ENCODE measurements at regions of chr2 and their contacts with region 1.

Region 1: DNA sequence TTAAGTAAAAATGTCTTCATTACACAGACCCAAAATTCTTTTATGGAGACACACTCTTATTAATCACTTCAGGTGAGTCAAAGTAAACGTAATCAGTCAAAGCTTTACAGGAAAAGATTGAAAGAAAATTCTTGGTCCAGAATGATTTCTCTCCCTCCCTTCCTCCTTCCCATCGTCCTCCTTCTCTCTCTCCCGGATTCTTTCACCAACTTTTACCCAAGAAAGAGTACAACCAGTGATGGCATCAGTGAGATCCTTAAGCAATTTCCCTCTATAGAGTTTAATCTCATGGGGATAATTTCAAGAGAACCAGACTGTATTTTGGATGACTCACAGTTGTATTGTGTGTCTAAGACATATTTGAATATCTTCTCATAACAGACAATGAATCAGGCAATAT is 258.1 kb downstream of the ALK start:
- DNase-seq: peak; percentile 83
- ATAC-seq: peak; percentile 75
- H3K4me3 ChIP-seq: peak overlapping the region; percentile 31
- H3K27ac ChIP-seq: peak overlapping the region; percentile 96
- H3K4me1 ChIP-seq: peaks cover 42% of the 10 kb centered on the region
- H3K27me3 ChIP-seq: no peaks in the 10 kb centered on the region
- CTCF ChIP-seq: no peak

Region 2: GRCh38 chr2:29420999-29421782 is 242.1 kb before region 1 on chr2:
- CTCF ChIA-PET with region 1: no interaction called
- POLR2A ChIA-PET with region 1: no interaction called
- intact Hi-C with region 1: loop called (anchors 1 kb)
- DNase-seq: no peak
- ATAC-seq: no peak
- H3K4me3 ChIP-seq: no peak overlapping the region
- H3K27ac ChIP-seq: no peak overlapping the region
- H3K4me1 ChIP-seq: no peaks in the 10 kb centered on the region
- H3K27me3 ChIP-seq: no peaks in the 10 kb centered on the region
- CTCF ChIP-seq: no peak

Region 3: GRCh38 chr2:29573612-29574011 is 89.7 kb before region 1 on chr2:
- CTCF ChIA-PET with region 1: no interaction called
- POLR2A ChIA-PET with region 1: no interaction called
- intact Hi-C with region 1: loop called (anchors 5 kb)
- DNase-seq: peak; percentile 65
- ATAC-seq: peak; percentile 97
- H3K4me3 ChIP-seq: no peak overlapping the region
- H3K27ac ChIP-seq: no peak overlapping the region
- H3K4me1 ChIP-seq: peaks cover 13% of the 10 kb centered on the region
- H3K27me3 ChIP-seq: no peaks in the 10 kb centered on the region
- CTCF ChIP-seq: no peak

Region 4: DNA sequence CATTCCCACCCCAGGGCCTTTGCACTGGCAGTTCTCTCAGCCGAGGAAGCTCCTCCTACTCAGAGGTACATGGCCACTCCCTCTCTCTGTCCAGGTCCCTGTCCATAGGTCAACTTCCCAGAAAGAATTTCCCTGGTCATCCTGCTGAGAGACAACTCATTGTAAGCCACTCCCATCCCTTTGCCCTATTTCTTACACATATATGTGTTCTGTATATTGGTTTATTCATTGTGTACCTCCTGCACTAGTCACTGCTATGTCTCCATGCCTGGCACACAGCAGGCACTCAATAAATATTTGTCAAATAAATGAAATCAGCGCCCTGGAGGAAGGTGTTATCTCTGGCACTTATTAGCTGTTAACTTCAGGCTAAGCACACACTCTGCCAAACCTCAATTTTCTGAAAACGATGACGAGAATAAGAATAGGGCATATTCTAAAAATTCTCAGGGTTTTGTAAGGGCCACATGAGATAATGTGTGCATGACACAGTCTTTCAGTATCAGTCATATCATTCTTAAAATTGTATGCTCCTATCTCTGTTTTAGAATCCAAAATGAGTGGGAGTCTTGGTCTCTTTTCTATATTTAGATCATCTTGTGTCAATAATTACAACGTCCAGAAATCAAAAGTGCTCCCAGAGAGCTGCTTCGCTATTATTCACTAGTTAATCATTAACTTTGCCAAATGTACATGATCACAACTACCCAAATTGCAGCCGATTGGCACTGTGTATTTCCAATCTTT is 60.2 kb after region 1 on chr2:
- CTCF ChIA-PET with region 1: no interaction called
- POLR2A ChIA-PET with region 1: no interaction called
- intact Hi-C with region 1: loop called (anchors 1 kb)
- DNase-seq: peak; percentile 89
- ATAC-seq: peak; percentile 98
- H3K4me3 ChIP-seq: no peak overlapping the region
- H3K27ac ChIP-seq: peak overlapping the region; percentile 80
- H3K4me1 ChIP-seq: peaks cover 18% of the 10 kb centered on the region
- H3K27me3 ChIP-seq: no peaks in the 10 kb centered on the region
- CTCF ChIP-seq: no peak